GM13977 (cell line): ENCODE measurements at regions of chr15 and their contacts with region 1.

Region 1: GRCh38 chr15:79184465-79184892 is 93.9 kb upstream of the RASGRF1 start:
- DNase-seq: peak; percentile 79
- CTCF ChIP-seq: peak; percentile 98

Region 2: GRCh38 chr15:78909791-78910228 is 274.7 kb before region 1 on chr15:
- in situ Hi-C with region 1: loop called (anchors 10 kb)
- DNase-seq: peak; percentile 52
- CTCF ChIP-seq: peak; percentile 68

Region 3: DNA sequence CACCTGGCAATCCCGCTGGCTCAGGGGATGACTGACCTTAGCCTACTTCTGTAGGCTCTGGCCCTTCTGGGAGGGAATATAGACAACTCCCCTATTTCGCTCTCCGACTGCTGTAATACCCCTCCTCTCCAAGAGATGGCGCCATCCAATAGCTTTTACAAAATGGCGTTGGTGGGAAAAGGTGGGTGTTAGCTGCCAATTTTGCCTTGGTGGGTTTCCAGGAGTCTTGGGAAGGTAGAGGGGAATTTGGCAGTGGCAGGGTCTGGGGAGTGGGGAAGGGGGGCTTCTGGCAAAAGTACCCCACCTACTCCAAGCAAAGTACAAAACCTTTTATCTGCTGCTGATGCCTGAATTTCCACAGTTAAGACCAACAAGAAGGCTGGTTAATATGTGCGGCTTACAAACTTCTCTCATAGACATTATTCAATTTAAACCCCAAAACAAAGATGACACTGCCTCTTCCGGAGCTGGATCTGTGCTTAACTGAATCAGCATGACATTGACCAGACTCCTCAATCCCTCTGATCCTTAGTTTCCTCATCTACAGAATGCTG is 156.0 kb before region 1 on chr15:
- in situ Hi-C with region 1: loop called (anchors 10 kb)
- DNase-seq: peak; percentile 76
- CTCF ChIP-seq: peak; percentile 91